CD14-positive monocyte (primary cell): ENCODE measurements at regions of chr11 and their contacts with region 1.

Region 1: DNA sequence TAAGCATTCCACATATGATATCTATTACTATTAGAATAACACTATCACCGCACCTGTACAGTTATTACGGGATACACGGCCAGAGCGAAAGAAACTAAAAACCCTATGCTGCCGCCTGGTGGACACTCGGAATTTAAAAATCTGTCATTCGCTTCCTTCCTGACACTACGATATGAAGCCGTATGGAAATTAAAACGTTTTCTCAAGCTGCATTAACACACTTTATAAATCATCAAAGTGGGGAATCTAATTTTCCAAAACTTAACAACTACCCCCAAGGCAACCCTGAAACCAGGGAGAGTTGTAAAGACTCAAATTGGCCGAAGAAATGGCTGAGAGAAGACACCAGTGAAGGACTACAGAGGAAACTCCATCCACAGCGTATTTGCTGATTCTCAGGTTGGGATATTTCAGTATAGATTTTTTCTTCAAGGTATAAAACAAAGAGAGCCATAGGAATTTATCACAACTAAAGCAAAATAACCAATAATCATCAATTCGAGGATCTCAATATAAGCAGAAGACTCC is 1.4 kb downstream of the CCDC73 start:
- DNase-seq: peak; percentile 21 to 58 (median 33)
- H3K4me3 ChIP-seq: peak overlapping the region in 2 of 3 experiments; percentile 13 to 55
- H3K4me3 Mint-ChIP-seq: peak overlapping the region in 1 of 2 donors; percentile 75
- H3K27ac ChIP-seq: no peak overlapping the region
- H3K27ac Mint-ChIP-seq: peak overlapping the region in 1 of 7 donors; percentile 23
- H3K4me1 ChIP-seq: peaks cover 7 to 8% of the 10 kb centered on the region in 2 donors
- H3K4me1 Mint-ChIP-seq: peaks cover 4% of the 10 kb centered on the region
- H3K27me3 ChIP-seq: no peaks in the 10 kb centered on the region
- H3K27me3 Mint-ChIP-seq: peaks cover 0 to 2% (median 0%) of the 10 kb centered on the region in 3 donors
- CTCF ChIP-seq: peak; percentile 90

Region 2: DNA sequence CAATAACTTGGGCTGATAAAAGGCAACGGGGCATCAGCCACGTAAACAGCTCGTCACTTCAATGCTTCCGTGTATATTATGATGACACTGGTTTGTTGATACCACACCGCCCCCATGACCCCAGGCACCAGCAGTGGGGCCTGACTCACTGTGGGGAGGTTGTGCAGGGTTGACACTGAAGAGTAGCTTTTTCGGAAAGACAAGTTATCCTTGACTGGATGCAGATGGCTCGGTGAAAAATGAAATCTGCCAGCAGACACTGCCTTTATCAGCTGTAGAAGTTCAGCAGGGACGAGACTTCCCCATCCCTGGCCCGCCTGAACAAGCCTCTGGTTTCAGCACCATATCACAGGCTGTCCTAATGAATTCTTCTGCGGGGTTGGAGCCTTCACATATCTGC is 413.3 kb before region 1 on chr11:
- intact Hi-C with region 1: loop called in 1 of 2 experiments (anchors 5 kb)
- DNase-seq: no peak
- H3K4me3 ChIP-seq: no peak overlapping the region
- H3K4me3 Mint-ChIP-seq: no peak overlapping the region
- H3K27ac ChIP-seq: no peak overlapping the region
- H3K27ac Mint-ChIP-seq: no peak overlapping the region
- H3K4me1 ChIP-seq: no peaks in the 10 kb centered on the region
- H3K4me1 Mint-ChIP-seq: no peaks in the 10 kb centered on the region
- H3K27me3 ChIP-seq: no peaks in the 10 kb centered on the region
- H3K27me3 Mint-ChIP-seq: peaks cover 0 to 4% (median 0%) of the 10 kb centered on the region in 3 donors
- CTCF ChIP-seq: no peak

Region 3: DNA sequence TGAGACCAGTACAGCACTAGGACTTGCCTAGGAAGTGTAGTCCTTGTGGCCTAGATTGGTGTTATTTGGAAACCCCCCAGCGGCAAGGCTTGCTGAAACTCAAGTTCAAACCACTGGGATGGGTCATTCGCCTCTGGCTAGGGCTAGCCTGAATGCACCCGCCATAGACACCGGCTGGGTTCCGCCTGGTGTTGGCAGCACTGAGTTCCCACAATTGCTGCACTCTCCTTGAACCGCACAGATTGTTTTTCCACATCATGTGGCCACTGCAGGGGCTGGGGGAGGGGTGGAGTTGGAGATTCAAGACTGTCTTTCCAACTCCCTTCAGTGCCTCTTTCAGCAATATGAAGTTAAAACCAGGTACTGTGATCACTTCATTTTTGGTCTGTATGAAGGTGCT is 41.6 kb before region 1 on chr11:
- intact Hi-C with region 1: loop called in 1 of 2 experiments (anchors 2 kb)
- DNase-seq: no peak
- H3K4me3 ChIP-seq: no peak overlapping the region
- H3K4me3 Mint-ChIP-seq: no peak overlapping the region
- H3K27ac ChIP-seq: no peak overlapping the region
- H3K27ac Mint-ChIP-seq: no peak overlapping the region
- H3K4me1 ChIP-seq: no peaks in the 10 kb centered on the region
- H3K4me1 Mint-ChIP-seq: no peaks in the 10 kb centered on the region
- H3K27me3 ChIP-seq: no peaks in the 10 kb centered on the region
- H3K27me3 Mint-ChIP-seq: peaks cover 1 to 4% (median 3%) of the 10 kb centered on the region in 3 donors
- CTCF ChIP-seq: no peak